ENCODE measurements at regions of chr1 and their contacts with region 1.

Region 1: GRCh38 chr1:116556289-116557006 is 14.4 kb downstream of the CD58 start:
- DNase-seq: peak; percentile 57 to 84
- ATAC-seq: peak; percentile 93 to 94 (median 94)
- H3K4me3 ChIP-seq: no peak overlapping the region
- H3K4me3 Mint-ChIP-seq: peak overlapping the region; percentile 42
- H3K27ac ChIP-seq: peak overlapping the region; percentile 82
- H3K27ac Mint-ChIP-seq: peak overlapping the region; percentile 59 to 85
- H3K4me1 ChIP-seq: peaks cover 34% of the 10 kb centered on the region
- H3K4me1 Mint-ChIP-seq: peaks cover 82 to 83% of the 10 kb centered on the region in 2 donors
- H3K27me3 ChIP-seq: no peaks in the 10 kb centered on the region
- H3K27me3 Mint-ChIP-seq: no peaks in the 10 kb centered on the region
- CTCF ChIP-seq: no peak

Region 2: GRCh38 chr1:116514708-116515525 is 41.5 kb before region 1 on chr1:
- intact Hi-C with region 1: loop called (anchors 1 kb)
- DNase-seq: peak; percentile 54 to 83
- ATAC-seq: peak; percentile 75 to 86 (median 76)
- H3K4me3 ChIP-seq: no peak overlapping the region
- H3K4me3 Mint-ChIP-seq: peak overlapping the region; percentile 82
- H3K27ac ChIP-seq: peak overlapping the region; percentile 88
- H3K27ac Mint-ChIP-seq: peak overlapping the region; percentile 99 to 100
- H3K4me1 ChIP-seq: peaks cover 54% of the 10 kb centered on the region
- H3K4me1 Mint-ChIP-seq: peaks cover 68 to 69% of the 10 kb centered on the region in 2 donors
- H3K27me3 ChIP-seq: no peaks in the 10 kb centered on the region
- H3K27me3 Mint-ChIP-seq: no peaks in the 10 kb centered on the region
- CTCF ChIP-seq: no peak

Region 3: GRCh38 chr1:117077267-117077666 is 520.8 kb after region 1 on chr1:
- intact Hi-C with region 1: no loop called
- DNase-seq: no peak
- ATAC-seq: no peak
- H3K4me3 ChIP-seq: no peak overlapping the region
- H3K4me3 Mint-ChIP-seq: no peak overlapping the region
- H3K27ac ChIP-seq: no peak overlapping the region
- H3K27ac Mint-ChIP-seq: no peak overlapping the region
- H3K4me1 ChIP-seq: no peaks in the 10 kb centered on the region
- H3K4me1 Mint-ChIP-seq: no peaks in the 10 kb centered on the region
- H3K27me3 ChIP-seq: no peaks in the 10 kb centered on the region
- H3K27me3 Mint-ChIP-seq: no peaks in the 10 kb centered on the region
- CTCF ChIP-seq: no peak